AG04450 (cell line): ENCODE measurements at regions of chr7 and their contacts with region 1.

Region 1: DNA sequence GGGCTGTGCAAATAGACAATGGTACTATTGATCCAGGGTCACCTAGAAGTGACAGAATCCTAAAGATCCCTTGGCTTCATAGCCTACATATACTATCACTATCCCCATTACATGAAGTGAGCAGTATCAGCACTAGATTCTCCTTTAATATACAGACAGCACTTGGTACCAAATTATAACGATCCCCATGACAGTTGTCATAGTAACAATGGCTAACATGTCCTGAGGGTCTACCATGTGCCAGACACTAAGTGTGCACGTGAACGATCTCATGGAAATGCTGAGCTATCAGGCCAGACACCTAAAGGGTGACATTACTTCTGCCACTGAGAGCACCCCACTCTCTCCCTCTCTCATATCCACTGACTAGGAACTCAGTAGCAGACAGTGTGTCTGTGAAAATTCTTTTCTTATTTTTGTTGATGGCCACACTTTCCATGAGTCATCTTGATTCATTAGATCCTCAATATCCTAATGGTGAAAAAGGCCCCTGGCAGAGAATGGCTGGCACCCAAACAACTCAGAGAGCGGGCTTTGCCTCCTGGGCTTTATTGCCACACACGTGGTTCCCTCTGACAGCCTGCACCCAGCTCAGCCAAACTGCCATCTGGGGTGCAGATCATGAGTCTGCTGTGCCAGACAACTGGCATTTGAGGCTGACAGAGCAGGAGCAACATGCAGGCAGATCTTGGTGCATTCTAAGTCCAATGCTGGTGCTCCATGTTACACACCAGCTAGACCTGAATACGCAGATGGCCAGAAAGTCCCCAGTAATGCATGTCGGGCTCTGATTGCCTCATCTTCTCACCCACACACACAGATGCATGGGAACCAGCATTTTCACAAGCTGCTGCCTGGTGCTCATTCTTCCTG is 176.3 kb downstream of the DGKI start:
- DNase-seq: no peak
- H3K4me3 ChIP-seq: no peak overlapping the region
- H3K27ac ChIP-seq: no peak overlapping the region
- H3K27me3 ChIP-seq: no peaks in the 10 kb centered on the region
- CTCF ChIP-seq: no peak

Region 2: GRCh38 chr7:137343281-137343841 is 327.1 kb before region 1 on chr7 and contains the start of gene PTN:
- CTCF ChIA-PET with region 1: no interaction called
- POLR2A ChIA-PET with region 1: no interaction called
- DNase-seq: peak; percentile 43
- H3K4me3 ChIP-seq: peak within 1 kb of the TSS; percentile 86
- H3K27ac ChIP-seq: peak within 1 kb of the TSS; percentile 41
- H3K27me3 ChIP-seq: no peaks in the 10 kb centered on the region
- CTCF ChIP-seq: no peak
- polyA plus RNA-seq, gene PTN: 136 and 168 TPM in 2 replicates

Region 3: GRCh38 chr7:137681657-137682562 is 11.5 kb after region 1 on chr7:
- CTCF ChIA-PET with region 1: interaction called, 3 read pairs
- POLR2A ChIA-PET with region 1: interaction called, 11 read pairs
- DNase-seq: peak; percentile 62
- H3K4me3 ChIP-seq: no peak overlapping the region
- H3K27ac ChIP-seq: peak overlapping the region; percentile 68
- H3K27me3 ChIP-seq: no peaks in the 10 kb centered on the region
- CTCF ChIP-seq: no peak

Region 4: DNA sequence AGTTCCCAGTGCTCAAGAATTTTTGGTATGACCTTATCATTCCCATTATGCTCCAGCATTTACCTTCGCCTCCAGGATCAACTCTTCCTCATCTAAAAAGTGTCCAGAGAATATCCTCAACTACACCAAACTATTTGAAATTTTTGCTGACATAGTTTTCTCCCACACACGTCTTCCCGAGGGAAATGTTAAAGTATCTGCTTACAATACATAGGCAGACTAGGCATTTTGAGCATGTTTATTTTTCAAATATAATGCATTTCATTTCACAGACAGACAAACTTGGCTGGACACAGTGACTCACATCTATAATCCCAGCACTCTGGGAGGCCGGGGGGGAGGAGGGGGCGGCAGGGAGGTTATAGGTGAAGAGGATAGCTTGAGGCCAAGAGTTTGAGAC is 612.6 kb after region 1 on chr7:
- CTCF ChIA-PET with region 1: no interaction called
- POLR2A ChIA-PET with region 1: no interaction called
- DNase-seq: no peak
- H3K4me3 ChIP-seq: no peak overlapping the region
- H3K27ac ChIP-seq: no peak overlapping the region
- H3K27me3 ChIP-seq: no peaks in the 10 kb centered on the region
- CTCF ChIP-seq: no peak